Calu3 (cell line): ENCODE measurements at regions of chr20 and their contacts with region 1.

Region 1: DNA sequence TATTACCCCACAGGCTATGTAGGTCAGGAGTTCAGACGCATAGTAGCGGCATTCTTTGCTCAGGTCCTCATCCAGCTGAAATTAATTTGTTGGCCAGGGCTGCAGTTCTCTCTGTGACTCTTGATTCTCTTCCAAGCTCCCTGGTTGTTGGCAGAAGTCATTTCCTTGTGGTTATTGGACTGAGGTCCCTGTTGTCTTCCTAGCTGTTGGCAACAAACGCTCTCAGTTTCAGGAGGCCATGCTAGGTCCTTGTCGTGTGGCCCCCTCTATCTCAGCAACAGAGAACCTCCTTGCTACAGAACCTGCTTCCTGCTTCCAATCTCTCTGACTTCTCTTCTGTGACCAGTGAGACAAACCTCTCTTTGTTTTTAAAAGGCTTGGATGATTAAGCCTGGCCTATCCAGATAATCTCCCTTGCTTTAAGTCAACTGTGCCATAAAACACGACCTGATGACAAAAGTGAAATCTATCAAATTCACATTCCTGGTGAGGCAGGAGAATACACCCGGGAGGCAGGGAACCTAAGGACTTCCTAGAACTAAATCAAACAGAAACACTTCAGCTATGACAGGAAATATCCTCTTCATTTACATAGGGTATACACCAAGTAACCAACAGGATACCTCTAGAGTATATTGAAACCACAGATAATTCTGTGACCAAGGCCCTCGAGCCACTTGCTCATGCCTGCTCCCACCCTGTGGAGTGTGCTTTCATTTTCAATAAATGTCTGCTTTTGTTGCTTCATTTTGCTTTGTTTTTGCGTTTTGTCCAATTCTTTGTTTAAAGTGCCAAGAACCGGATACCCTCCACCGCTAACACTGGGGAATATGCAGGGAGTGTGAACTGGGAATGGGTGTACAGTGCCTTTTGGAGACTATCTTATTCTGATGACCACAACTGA is 196.0 kb downstream of the BTBD3 start:
- DNase-seq: peak; percentile 49
- H3K4me3 Mint-ChIP-seq: peak overlapping the region; percentile 46
- H3K27ac Mint-ChIP-seq: peak overlapping the region; percentile 78
- H3K4me1 Mint-ChIP-seq: peaks cover 35% of the 10 kb centered on the region
- H3K27me3 Mint-ChIP-seq: no peaks in the 10 kb centered on the region
- CTCF ChIP-seq: no peak

Region 2: DNA sequence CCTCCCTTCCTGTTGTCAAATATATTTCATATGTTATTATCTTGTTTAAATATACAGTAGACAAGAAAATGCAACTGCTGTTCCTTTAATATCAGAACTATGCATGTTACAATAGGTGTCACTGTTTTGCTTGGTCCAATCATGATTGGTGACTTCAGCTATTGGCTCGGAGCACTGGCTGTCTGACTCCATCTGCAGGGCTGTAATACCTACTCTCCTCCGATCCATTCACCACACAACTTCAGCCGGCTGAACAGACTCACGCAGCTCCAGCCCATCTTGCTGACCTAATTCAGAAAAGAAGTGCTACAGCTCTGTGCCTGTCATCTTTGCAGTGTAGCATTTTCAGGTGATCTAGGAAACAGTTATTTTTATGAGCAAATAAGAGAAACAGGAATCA is 196.1 kb before region 1 on chr20 and contains the start of gene BTBD3:
- CTCF ChIA-PET with region 1: no interaction called
- intact Hi-C with region 1: loop called (anchors 10 kb)
- DNase-seq: no peak
- H3K4me3 Mint-ChIP-seq: no peak within 1 kb of the TSS
- H3K27ac Mint-ChIP-seq: no peak within 1 kb of the TSS
- H3K4me1 Mint-ChIP-seq: no peaks in the 10 kb centered on the region
- H3K27me3 Mint-ChIP-seq: no peaks in the 10 kb centered on the region
- CTCF ChIP-seq: no peak
- total RNA-seq, gene BTBD3: 29.6 and 38.2 TPM in 2 replicates

Region 3: DNA sequence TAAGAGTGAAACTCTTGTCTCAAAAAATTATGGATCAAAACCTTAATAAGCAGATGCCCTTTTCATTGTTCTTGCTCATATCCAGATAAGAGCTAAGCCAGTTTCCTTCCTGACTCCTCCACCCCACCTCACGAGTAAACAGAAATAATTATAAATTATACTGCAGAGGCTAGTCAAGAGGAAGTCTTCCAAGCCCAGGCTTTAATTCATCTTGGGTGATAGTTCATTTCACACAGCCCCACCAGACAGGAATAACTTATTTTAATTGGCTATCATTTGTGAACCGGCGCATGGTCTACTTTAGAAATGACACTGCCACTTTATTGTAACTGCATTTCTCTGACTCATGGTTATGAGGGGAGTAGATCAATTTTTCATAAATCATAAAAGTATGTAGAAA is 94.0 kb before region 1 on chr20:
- CTCF ChIA-PET with region 1: no interaction called
- intact Hi-C with region 1: no loop called
- DNase-seq: no peak
- H3K4me3 Mint-ChIP-seq: no peak overlapping the region
- H3K27ac Mint-ChIP-seq: no peak overlapping the region
- H3K4me1 Mint-ChIP-seq: no peaks in the 10 kb centered on the region
- H3K27me3 Mint-ChIP-seq: no peaks in the 10 kb centered on the region
- CTCF ChIP-seq: no peak

Region 4: GRCh38 chr20:12153628-12154027 is 39.9 kb after region 1 on chr20:
- CTCF ChIA-PET with region 1: no interaction called
- intact Hi-C with region 1: loop called (anchors 5 kb)
- DNase-seq: no peak
- H3K4me3 Mint-ChIP-seq: peak overlapping the region; percentile 50
- H3K27ac Mint-ChIP-seq: peak overlapping the region; percentile 96
- H3K4me1 Mint-ChIP-seq: peaks cover 41% of the 10 kb centered on the region
- H3K27me3 Mint-ChIP-seq: no peaks in the 10 kb centered on the region
- CTCF ChIP-seq: no peak

Region 5: GRCh38 chr20:12177657-12178293 is 64.1 kb after region 1 on chr20:
- CTCF ChIA-PET with region 1: no interaction called
- intact Hi-C with region 1: loop called (anchors 5 kb)
- DNase-seq: peak; percentile 59
- H3K4me3 Mint-ChIP-seq: peak overlapping the region; percentile 32
- H3K27ac Mint-ChIP-seq: peak overlapping the region; percentile 71
- H3K4me1 Mint-ChIP-seq: peaks cover 38% of the 10 kb centered on the region
- H3K27me3 Mint-ChIP-seq: no peaks in the 10 kb centered on the region
- CTCF ChIP-seq: no peak